Mammary epithelial cell (primary cell): ENCODE measurements at regions of chr1 and their contacts with region 1.

Region 1: GRCh38 chr1:19033861-19034680 is 77.6 kb upstream of the IFFO2 start:
- DNase-seq: peak; percentile 99
- H3K4me3 ChIP-seq: no peak overlapping the region
- H3K27ac ChIP-seq: peak overlapping the region; percentile 63
- H3K4me1 ChIP-seq: peaks cover 20% of the 10 kb centered on the region
- H3K27me3 ChIP-seq: no peaks in the 10 kb centered on the region
- CTCF ChIP-seq: no peak

Region 2: DNA sequence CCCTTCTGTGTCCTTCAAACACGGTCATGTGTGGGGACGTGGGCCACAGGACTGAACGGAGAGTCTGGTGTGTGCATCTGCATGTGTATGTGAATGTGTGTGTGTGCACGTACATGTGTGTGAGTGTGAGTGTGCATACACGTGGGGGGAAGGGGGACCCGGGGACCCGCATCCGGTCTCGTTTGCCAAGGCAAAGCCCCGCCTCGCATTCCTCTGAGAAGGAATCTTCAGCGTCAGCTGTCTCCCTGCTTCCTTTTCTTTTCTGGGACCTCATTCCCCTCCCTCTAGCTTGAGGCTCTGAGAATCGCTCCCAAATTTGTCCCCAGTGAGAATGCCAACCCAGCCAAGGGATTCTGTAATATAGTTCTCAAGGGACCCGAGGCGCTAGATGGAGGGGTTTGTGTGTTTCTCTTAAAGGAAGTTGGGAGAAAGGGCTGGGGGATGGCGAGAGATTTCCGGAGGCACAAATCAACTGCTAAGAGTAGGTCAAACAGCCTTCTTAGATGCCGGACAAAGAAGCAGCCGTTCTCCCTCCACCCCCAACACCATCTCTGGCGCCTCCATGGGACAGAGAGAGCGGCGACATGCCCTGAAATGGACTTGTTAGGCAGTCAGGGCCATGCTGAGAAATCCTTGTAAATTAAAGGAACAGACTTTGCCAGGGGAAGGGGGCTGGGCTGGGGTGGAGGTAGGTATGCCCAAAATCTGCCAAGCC is 84.2 kb before region 1 on chr1:
- CTCF ChIA-PET with region 1: no interaction called
- dilution Hi-C with region 1: no loop called
- in situ Hi-C with region 1: no loop called
- intact Hi-C with region 1: loop called (anchors 1 kb)
- DNase-seq: peak; percentile 47
- H3K4me3 ChIP-seq: peak overlapping the region; percentile 36 to 43 (median 39)
- H3K27ac ChIP-seq: peak overlapping the region; percentile 92
- H3K4me1 ChIP-seq: peaks cover 85% of the 10 kb centered on the region
- H3K27me3 ChIP-seq: no peaks in the 10 kb centered on the region
- CTCF ChIP-seq: peak in 1 of 2 donors; percentile 37

Region 3: GRCh38 chr1:18956369-18957135 is 77.5 kb before region 1 on chr1 and contains the start of gene IFFO2:
- CTCF ChIA-PET with region 1: no interaction called
- dilution Hi-C with region 1: no loop called
- in situ Hi-C with region 1: no loop called
- intact Hi-C with region 1: loop called (anchors 1 kb)
- DNase-seq: peak; percentile 91
- H3K4me3 ChIP-seq: peak within 1 kb of the TSS; percentile 76 to 93 (median 88)
- H3K27ac ChIP-seq: peak within 1 kb of the TSS; percentile 92
- H3K4me1 ChIP-seq: peaks cover 33% of the 10 kb centered on the region
- H3K27me3 ChIP-seq: no peaks in the 10 kb centered on the region
- CTCF ChIP-seq: no peak
- total RNA-seq, gene IFFO2: 94.8 to 304 TPM

Region 4: GRCh38 chr1:18999359-18999758 is 34.7 kb before region 1 on chr1:
- CTCF ChIA-PET with region 1: no interaction called
- dilution Hi-C with region 1: loop called (anchors 5 kb)
- in situ Hi-C with region 1: no loop called
- intact Hi-C with region 1: loop called (anchors 1 kb)
- DNase-seq: no peak
- H3K4me3 ChIP-seq: no peak overlapping the region
- H3K27ac ChIP-seq: peak overlapping the region; percentile 70
- H3K4me1 ChIP-seq: peaks cover 25% of the 10 kb centered on the region
- H3K27me3 ChIP-seq: no peaks in the 10 kb centered on the region
- CTCF ChIP-seq: no peak

Region 5: DNA sequence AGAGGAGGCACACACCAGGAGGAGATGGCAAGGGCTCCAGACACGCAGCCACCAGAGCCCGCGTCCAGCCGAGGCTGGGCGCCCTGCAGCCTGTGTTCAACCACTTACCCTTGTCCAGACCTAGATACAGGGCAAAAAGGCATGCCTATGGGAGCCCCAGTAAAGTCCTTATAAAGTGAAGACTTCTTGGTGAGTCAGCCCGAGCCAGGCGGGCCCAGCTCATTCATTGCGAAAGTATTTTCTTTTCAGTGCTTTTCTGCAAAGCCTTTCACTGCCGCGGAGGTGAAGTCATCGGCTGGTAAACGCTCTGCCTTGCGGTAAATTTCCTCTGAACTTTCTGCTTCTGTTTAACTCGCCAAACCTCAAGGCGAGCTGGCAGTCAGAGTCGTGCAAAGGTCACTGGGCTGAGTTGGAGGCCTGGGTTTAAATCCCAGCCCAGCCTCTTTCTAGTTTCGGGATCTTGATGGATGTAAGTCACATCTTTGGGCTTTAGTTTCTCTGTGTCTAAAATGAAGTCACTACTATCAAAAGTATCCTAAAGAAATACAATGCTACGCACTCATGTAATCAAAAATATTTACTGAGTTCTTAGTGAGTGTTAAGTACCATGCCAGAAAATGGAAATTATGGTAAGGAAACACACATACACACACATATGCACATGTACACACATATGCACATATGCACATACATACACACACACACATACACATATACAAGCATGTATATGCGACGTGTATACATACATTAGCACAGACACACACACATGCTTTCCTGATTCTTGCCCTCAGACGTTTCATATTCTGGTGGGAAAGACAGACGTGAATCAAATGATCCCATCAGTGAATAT is 22.9 kb before region 1 on chr1:
- CTCF ChIA-PET with region 1: no interaction called
- dilution Hi-C with region 1: no loop called
- in situ Hi-C with region 1: no loop called
- intact Hi-C with region 1: loop called (anchors 1 kb)
- DNase-seq: peak; percentile 98
- H3K4me3 ChIP-seq: no peak overlapping the region
- H3K27ac ChIP-seq: peak overlapping the region; percentile 71
- H3K4me1 ChIP-seq: peaks cover 33% of the 10 kb centered on the region
- H3K27me3 ChIP-seq: no peaks in the 10 kb centered on the region
- CTCF ChIP-seq: no peak

Region 6: GRCh38 chr1:19074902-19075721 is 41.0 kb after region 1 on chr1:
- CTCF ChIA-PET with region 1: no interaction called
- dilution Hi-C with region 1: no loop called
- in situ Hi-C with region 1: no loop called
- intact Hi-C with region 1: loop called (anchors 1 kb)
- DNase-seq: peak; percentile 97
- H3K4me3 ChIP-seq: no peak overlapping the region
- H3K27ac ChIP-seq: peak overlapping the region; percentile 71
- H3K4me1 ChIP-seq: peaks cover 48% of the 10 kb centered on the region
- H3K27me3 ChIP-seq: no peaks in the 10 kb centered on the region
- CTCF ChIP-seq: no peak

Region 7: DNA sequence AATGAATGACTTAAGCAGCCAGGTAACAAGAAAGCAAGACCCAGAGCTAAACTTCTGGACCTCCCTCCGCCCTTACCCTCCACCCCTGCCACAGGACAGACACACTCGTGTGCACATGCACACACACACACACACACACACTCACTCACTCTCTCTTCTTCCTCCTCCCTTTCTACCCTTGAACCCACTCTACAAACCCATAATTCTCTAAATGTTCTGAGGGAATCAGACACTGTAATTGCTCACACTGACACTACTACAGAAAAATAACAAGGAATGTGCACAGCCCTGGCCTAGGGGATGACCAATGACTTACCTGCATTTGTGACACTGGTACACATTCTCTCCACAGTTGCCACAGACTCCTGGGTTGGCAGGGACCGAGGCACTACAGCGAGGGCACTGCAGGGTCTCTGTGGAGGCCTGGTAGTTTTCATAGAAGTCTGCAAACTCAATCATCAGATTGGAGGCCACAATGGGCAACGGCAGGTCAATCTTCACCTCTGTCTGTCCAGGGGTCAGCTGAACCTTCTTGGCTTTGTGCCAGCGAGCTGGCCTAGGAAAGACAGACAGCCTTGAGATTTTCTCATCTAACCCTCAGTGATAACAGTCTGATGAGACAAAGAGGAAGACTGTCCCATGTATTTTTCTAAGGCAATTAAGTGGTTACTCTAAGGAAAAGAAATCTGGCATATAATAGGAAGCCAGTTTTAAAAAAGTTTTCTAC is 81.2 kb after region 1 on chr1:
- CTCF ChIA-PET with region 1: no interaction called
- dilution Hi-C with region 1: loop called (anchors 5 kb)
- in situ Hi-C with region 1: no loop called
- intact Hi-C with region 1: no loop called
- DNase-seq: no peak
- H3K4me3 ChIP-seq: no peak overlapping the region
- H3K27ac ChIP-seq: no peak overlapping the region
- H3K4me1 ChIP-seq: no peaks in the 10 kb centered on the region
- H3K27me3 ChIP-seq: no peaks in the 10 kb centered on the region
- CTCF ChIP-seq: no peak

Region 8: DNA sequence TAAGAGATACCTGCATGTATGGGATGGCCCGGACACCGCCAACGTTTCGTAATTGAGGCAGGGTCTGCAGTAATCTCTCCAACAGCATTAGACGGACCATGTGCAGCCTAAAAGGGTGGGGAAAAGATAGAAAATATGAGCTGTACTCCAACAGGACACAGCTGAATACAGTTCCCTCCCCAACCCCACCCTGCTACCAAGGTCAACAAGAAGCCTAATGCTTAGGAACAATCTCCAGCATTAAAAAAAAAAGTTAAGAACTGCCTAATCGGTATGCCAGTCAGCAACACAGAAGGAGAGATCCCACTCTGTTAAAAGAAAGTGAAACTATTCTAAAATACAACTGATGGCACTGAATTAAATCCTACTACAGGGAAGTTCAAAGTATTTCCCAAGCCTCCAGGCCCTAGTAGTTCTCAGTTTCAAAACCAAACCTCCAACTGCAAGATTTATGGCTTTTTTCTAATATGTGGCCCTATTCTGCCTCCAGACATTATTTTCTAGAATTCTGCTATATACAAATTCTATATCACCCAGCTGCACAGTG is 95.0 kb after region 1 on chr1:
- CTCF ChIA-PET with region 1: no interaction called
- dilution Hi-C with region 1: no loop called
- in situ Hi-C with region 1: no loop called
- intact Hi-C with region 1: no loop called
- DNase-seq: no peak
- H3K4me3 ChIP-seq: no peak overlapping the region
- H3K27ac ChIP-seq: no peak overlapping the region
- H3K4me1 ChIP-seq: no peaks in the 10 kb centered on the region
- H3K27me3 ChIP-seq: no peaks in the 10 kb centered on the region
- CTCF ChIP-seq: no peak